ENCODE measurements at regions of chr3 and their contacts with region 1.

Region 1: DNA sequence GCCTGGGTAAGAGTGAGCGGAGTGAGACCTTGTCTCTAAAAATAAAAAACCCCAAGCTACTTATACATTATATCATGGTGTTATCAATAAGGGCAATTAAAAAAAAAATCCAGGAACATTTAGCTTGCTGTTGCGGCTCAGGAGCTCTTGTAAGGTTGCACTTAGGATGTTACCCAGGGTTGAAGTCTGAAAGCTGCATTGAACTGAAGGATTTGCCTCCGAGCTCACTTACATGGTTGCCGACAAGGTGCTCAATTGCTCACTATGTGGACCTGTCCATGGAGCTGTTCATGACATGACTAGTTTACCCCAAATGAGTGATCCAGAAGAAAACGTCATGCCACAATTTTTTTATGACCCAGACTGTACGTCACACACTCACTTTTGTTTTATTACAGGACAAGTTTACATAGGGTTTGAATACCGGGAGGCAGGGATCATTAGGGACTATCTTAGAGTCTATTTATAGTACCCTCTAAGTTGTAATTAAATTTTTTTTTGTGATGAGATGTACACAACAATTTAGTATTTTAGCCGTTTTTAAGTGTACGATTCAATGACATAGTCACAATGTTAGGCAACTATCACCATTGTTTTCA is 21.0 kb upstream of the CLDN11 start:
- DNase-seq: no peak
- ATAC-seq: no peak

Region 2: DNA sequence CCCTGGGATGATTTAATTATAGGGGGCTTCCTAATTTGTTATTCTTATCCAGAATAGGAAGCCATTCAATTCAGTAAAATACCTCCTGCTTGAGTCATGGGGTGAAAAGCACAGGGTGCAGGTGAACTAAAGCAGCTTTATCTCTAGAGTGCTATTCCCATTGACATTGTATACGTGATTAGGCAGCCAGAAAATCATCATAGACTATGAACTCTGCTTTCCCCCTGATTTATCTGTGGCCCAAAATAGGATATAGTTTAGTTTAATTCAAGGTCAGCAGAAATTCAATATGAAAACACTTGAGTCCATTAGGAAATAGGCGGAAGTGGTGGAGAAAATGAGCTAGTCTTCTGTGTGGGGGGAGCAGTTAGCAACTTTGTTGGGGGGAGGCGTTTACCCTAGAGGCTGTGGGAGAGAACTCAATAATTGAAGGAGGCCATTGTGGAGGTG is 193.6 kb before region 1 on chr3:
- intact Hi-C with region 1: loop called (anchors 5 kb)
- DNase-seq: no peak
- ATAC-seq: no peak

Region 3: GRCh38 chr3:170233530-170233929 is 164.1 kb before region 1 on chr3:
- intact Hi-C with region 1: no loop called
- DNase-seq: no peak
- ATAC-seq: peak; percentile 50

Region 4: DNA sequence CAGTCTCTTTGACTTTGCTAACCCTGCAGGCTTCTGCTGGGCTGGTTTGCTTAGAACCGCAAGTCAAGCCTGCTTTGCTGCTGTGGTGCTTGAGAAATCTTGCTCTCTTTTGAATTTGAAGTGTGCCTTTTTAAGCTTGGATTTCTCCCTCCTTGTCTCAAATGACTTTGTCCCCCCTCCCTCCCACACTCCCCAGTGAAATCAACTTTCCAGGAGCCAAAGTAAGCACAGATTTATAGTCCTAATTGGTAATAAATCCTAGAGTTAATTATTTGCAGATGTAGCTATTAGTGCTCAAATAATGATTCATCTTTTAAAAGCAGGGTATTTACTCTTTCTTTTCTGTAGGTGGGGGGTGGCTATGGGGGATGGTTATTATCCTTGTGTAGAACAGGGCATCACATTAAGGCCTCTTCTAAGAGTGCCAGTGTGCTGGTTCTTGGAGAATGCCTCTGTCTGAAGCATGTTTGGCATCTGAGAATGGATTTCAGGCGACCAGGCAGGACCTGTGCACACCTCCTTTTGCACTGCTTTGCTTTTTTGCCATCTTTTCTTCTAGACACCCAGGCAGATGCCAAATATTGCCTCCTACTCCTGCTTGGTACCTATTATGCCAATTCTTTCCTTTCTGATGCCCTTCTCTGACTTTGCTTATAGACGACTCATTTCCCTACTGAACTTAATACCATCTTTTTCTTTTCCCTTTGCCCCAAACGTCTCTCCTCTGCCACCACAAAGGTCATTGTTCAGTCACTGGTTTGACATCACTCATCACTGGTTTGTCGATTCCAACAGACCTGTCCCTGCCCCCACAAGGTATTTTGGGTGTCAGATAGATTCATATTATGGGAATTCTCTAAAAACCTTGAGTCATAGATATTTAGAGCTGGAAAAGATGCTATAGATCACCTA is 71.7 kb after region 1 on chr3:
- intact Hi-C with region 1: no loop called
- DNase-seq: no peak
- ATAC-seq: no peak

Region 5: DNA sequence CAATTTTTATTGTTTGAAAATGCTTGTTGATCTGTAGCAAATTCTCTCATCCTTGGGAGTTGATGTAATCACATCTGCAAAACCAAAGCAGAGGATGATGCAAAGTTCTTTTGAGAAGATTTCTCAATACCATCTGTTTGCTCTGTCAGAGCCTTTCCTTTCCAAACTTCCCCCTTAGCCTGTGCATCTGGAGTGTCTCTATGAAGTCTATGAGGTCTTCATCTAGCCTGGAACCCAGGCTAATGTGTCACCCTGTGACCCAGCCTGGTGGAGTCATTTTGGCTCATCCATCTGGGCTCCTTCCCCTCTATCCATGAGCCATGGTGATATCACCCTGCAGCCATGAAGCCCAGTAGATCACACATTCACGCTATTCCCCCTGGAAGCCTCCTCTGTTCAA is 311.4 kb after region 1 on chr3:
- intact Hi-C with region 1: no loop called
- DNase-seq: no peak
- ATAC-seq: peak; percentile 99

Region 6: GRCh38 chr3:171393032-171393744 is 995.5 kb after region 1 on chr3:
- intact Hi-C with region 1: no loop called
- DNase-seq: no peak
- ATAC-seq: peak; percentile 20

Measured in left ventricle myocardium superior (tissue), 1 donor.